ENCODE measurements at regions of chr6 and their contacts with region 1.

Region 1: GRCh38 chr6:45714741-45715507 is 300.7 kb downstream of the CLIC5 start:
- DNase-seq: peak; percentile 88
- H3K4me3 Mint-ChIP-seq: peak overlapping the region; percentile 50
- H3K27ac Mint-ChIP-seq: peak overlapping the region; percentile 89
- H3K4me1 Mint-ChIP-seq: peaks cover 53% of the 10 kb centered on the region
- H3K27me3 Mint-ChIP-seq: peaks cover 3% of the 10 kb centered on the region

Region 2: GRCh38 chr6:44925100-44925739 is 789.7 kb before region 1 on chr6:
- intact Hi-C with region 1: loop called (anchors 5 kb)
- DNase-seq: peak; percentile 83
- H3K4me3 Mint-ChIP-seq: peak overlapping the region; percentile 68
- H3K27ac Mint-ChIP-seq: peak overlapping the region; percentile 74
- H3K4me1 Mint-ChIP-seq: peaks cover 46% of the 10 kb centered on the region
- H3K27me3 Mint-ChIP-seq: no peaks in the 10 kb centered on the region

Region 3: GRCh38 chr6:45377554-45378333 is 337.2 kb before region 1 on chr6 and contains the start of gene SUPT3H:
- intact Hi-C with region 1: loop called (anchors 1 kb)
- DNase-seq: peak; percentile 97
- H3K4me3 Mint-ChIP-seq: peak within 1 kb of the TSS; percentile 99
- H3K27ac Mint-ChIP-seq: peak within 1 kb of the TSS; percentile 100
- H3K4me1 Mint-ChIP-seq: peaks cover 25% of the 10 kb centered on the region
- H3K27me3 Mint-ChIP-seq: no peaks in the 10 kb centered on the region
- total RNA-seq, gene SUPT3H: 12.4 and 13.0 TPM in 2 replicates

Region 4: DNA sequence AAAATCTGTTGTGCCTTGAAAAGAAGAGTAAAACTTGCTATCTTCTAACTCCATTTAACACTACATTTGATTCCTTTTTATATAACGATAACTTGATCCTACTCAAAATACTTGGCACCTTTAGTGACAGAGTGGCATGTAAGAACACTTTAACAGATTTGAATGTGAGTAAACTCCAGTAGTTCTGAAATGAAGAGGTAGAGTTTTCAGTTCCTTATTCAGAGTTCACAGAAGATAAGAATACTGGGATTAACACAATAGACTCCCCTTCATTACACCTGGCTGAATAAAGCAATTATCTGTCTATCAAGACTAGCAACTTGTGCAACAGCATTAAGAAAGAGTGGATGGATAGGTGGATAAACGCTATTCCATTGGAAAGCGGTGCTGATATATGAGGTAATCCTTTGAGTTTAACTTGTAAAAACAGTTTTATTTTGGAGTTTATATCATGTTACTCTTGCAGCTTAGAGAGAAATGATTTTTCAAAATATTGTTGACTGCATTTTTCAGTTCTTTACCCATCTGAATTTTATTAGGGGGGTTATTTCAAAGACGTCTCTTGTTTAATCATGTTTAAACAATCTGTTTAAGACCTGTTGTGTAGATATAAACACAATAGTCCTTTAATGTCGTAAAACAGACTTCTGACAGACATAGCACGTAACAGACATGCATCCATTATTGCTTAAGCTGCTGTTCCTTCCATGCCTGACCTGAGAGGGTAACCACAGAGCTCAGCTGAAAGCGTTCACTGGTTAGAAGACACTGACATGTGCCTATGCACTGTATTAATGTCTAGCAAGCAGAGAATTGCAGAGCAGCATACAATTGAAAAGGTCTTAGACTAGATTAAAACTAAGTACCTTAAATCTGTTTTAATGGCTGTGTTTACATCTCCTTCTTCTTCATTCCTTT is 234.8 kb before region 1 on chr6:
- intact Hi-C with region 1: loop called (anchors 2 kb)
- DNase-seq: no peak
- H3K4me3 Mint-ChIP-seq: no peak overlapping the region
- H3K27ac Mint-ChIP-seq: no peak overlapping the region
- H3K4me1 Mint-ChIP-seq: peaks cover 22% of the 10 kb centered on the region
- H3K27me3 Mint-ChIP-seq: no peaks in the 10 kb centered on the region

Region 5: DNA sequence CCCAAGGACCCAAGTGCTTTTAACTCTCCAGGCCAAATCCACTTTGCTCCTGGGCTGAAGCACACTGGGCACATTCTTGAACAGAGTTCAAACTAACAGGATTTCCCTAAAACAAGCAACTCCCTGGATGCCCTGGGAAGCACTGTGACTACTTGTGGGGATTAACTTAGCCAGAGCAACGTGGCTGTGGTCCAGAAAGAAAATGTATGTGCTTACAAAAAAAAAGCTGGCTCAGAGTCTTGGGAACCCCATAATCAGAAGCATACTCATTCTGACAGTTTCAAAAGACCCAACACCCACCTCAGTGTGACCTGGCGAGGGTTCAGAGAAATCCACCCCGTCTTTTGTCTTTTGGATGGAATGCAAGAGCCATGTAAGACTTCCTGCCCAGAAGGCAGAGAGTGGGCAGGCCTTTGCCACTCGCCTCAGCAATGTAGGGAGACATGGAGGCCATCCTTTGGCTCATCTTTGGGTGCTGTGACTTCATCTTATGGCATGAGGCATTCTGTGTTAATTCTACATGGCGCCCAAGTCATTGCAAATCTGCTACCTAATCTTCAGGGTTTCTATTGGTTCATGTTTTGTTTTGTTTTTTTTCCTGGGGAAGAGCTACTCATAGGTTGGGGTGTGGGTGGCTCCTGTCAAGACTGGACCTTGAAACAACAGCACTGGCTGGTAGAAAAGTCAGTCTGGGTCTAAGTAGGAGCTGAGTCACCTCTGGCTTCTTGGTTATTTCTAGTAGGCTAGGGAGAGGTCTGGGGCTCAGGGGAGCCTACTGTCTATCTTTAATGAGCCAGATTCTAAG is 88.6 kb before region 1 on chr6:
- intact Hi-C with region 1: loop called (anchors 1 kb)
- DNase-seq: no peak
- H3K4me3 Mint-ChIP-seq: peak overlapping the region; percentile 3
- H3K27ac Mint-ChIP-seq: peak overlapping the region; percentile 82
- H3K4me1 Mint-ChIP-seq: peaks cover 39% of the 10 kb centered on the region
- H3K27me3 Mint-ChIP-seq: no peaks in the 10 kb centered on the region

Region 6: DNA sequence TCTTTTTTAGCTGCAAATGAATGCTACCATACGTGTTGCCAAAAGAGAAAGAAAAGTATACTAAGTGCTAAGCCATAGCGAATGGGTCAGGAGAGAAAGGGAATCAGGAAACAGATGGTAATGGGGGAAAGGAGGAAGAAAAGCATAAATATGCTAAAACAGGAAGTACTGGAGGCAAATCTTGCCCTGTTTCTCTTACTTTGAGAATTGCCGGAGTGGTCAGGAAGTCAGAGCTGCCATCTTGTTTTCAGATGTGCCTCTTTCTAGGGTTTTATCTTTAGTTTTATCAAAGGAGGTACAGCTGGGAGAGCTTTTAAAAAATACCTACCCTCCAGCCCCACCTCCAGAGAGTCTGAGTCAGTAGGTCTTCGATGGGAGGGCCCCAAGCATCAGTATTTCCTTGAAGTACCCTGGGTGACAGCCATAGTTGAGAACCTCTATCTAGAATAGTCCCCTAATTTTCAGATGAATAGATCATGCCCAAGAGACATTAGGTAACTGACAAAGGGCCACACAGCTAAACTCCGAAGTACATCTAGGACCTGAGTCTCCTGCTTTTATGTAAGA is 107.4 kb after region 1 on chr6:
- intact Hi-C with region 1: loop called (anchors 2 kb)
- DNase-seq: no peak
- H3K4me3 Mint-ChIP-seq: peak overlapping the region; percentile 44
- H3K27ac Mint-ChIP-seq: peak overlapping the region; percentile 71
- H3K4me1 Mint-ChIP-seq: peaks cover 24% of the 10 kb centered on the region
- H3K27me3 Mint-ChIP-seq: no peaks in the 10 kb centered on the region

Region 7: GRCh38 chr6:46160102-46160501 is 445.2 kb after region 1 on chr6:
- intact Hi-C with region 1: no loop called
- DNase-seq: no peak
- H3K4me3 Mint-ChIP-seq: no peak overlapping the region
- H3K27ac Mint-ChIP-seq: no peak overlapping the region
- H3K4me1 Mint-ChIP-seq: no peaks in the 10 kb centered on the region
- H3K27me3 Mint-ChIP-seq: peaks cover 34% of the 10 kb centered on the region